Ovary (tissue), 10 donors: ENCODE measurements at regions of chr4 and their contacts with region 1.

Region 1: GRCh38 chr4:8594097-8595038 is 1.8 kb downstream of the CPZ start:
- DNase-seq: peak; percentile 73 to 85 (median 76)
- H3K4me3 ChIP-seq: peak overlapping the region; percentile 45
- H3K27ac ChIP-seq: peak overlapping the region; percentile 83 to 87
- H3K4me1 ChIP-seq: peaks cover 39% of the 10 kb centered on the region
- H3K27me3 ChIP-seq: no peaks in the 10 kb centered on the region
- CTCF ChIP-seq: peak; percentile 66 to 87 (median 80)
- EP300 ChIP-seq: no peak
- POLR2A ChIP-seq: no peak

Region 2: DNA sequence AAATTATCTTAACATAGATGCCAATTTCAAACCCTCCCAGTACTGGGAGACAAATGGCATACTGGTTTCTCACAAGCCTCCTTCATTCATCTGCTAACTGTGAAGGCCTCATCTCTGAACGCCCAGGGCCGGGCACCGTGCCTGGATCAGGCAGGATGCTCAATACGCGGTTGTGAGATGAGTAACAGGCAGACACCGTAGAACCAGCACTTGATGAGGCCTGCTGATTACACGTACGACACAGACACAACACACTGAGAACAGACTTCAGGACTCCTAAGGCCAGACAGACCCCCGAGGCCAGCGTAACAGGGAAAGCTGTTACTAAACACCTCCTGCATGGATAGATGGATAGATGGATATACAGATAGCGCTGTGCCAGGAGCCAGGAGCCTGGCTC is 809.4 kb before region 1 on chr4:
- intact Hi-C with region 1: no loop called
- DNase-seq: peak in 2 of 5 donors; percentile 7 to 18
- H3K4me3 ChIP-seq: no peak overlapping the region
- H3K27ac ChIP-seq: no peak overlapping the region
- H3K4me1 ChIP-seq: peaks cover 15% of the 10 kb centered on the region
- H3K27me3 ChIP-seq: no peaks in the 10 kb centered on the region
- CTCF ChIP-seq: no peak
- EP300 ChIP-seq: no peak
- POLR2A ChIP-seq: no peak

Region 3: DNA sequence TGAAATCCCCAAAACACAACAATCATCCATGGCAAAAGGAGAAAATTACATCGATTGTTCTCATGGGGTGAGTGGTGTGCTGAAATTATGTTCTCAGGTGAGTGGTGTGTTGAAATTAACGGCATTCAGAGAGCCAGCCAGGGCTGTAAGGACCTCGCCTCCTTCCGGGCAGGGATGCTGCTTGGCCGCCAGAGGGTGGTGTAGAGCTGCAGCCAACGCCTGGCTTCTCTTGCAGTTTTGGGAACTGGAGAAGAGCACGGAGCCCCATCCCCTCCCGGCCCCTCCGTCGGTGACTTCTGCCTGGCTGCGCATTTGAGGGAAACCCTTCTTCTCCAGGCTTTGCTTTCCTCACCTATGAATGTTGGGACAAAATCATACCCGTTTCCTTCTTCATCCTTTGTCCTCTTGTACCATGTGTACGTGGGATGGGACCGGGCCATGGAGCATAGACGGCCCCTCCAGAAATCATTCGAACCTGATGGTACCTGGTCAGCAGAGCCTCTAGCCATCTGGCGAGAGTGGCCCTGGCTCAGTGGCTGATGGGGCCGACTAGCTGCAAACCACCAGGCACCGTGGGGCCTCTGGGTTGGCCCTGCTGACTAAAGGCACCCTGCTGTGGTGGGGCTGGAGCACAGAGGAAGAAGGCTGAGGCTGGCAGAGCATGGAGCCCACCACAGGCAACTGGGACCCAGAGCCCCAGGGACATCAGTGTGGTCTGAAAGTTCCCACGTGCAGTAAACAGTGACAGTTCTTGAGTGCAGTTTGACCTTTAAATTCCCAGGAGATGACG is 125.4 kb before region 1 on chr4:
- intact Hi-C with region 1: loop called (anchors 1 to 2 kb)
- DNase-seq: peak; percentile 82 to 90 (median 89)
- H3K4me3 ChIP-seq: no peak overlapping the region
- H3K27ac ChIP-seq: peak overlapping the region in 1 of 2 donors; percentile 93
- H3K4me1 ChIP-seq: peaks cover 30% of the 10 kb centered on the region
- H3K27me3 ChIP-seq: no peaks in the 10 kb centered on the region
- CTCF ChIP-seq: peak; percentile 92 to 93 (median 92)
- EP300 ChIP-seq: no peak
- POLR2A ChIP-seq: no peak

Region 4: DNA sequence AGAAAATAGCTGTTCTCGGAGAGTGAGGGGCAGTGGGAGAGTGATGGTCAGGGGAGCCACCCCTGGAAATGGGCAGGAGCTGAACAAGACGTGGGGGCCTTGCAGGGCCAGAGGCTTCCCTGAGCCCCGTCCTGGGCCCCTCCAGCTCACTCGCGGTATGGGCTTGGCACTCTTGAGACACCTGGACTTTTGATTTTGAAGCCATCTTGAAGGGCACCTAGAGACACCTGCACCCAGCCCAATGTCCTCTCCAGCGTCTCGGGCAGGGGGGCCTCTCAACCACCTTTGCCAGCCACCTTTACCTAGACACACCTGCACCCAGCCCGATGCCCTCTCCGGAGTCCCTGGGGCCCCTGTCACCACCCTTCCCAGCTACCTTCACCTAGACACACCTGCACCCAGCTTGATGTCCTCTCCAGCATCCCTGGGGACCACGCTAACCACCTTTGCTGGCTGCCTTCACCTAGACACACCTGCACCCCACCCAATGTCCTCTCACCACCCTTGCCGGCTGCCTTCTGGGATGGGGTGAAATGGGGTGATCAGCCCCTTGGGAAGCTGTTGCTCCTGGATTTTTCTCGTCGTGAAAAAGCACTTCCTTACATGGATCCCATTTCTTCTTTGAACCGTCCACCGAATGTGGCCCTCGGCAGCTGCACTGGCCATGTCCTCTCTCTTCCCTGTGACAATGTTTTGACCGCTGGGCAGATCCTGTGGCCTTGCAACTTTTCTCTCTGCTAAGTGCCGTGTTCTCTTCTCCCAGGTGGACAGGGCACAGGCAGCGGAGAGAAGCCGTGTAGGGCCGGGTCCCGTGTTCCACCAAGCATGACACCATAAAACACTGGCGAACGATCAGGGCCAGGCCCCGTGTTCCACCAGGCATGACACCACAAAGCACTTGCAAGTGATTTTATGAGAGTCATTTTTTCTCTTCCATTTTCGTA is 45.7 kb after region 1 on chr4:
- intact Hi-C with region 1: no loop called
- DNase-seq: peak in 1 of 5 donors; percentile 18
- H3K4me3 ChIP-seq: no peak overlapping the region
- H3K27ac ChIP-seq: no peak overlapping the region
- H3K4me1 ChIP-seq: no peaks in the 10 kb centered on the region
- H3K27me3 ChIP-seq: no peaks in the 10 kb centered on the region
- CTCF ChIP-seq: no peak
- EP300 ChIP-seq: no peak
- POLR2A ChIP-seq: no peak